ENCODE measurements at regions of chr1 and their contacts with region 1.

Region 1: GRCh38 chr1:92080128-92080985 is at the start of gene BTBD8:
- DNase-seq: peak; percentile 71
- ATAC-seq: peak; percentile 98
- H3K4me3 ChIP-seq: peak within 1 kb of the TSS; percentile 77
- H3K27ac ChIP-seq: peak within 1 kb of the TSS; percentile 55
- H3K4me1 ChIP-seq: no peaks in the 10 kb centered on the region
- H3K27me3 ChIP-seq: no peaks in the 10 kb centered on the region
- CTCF ChIP-seq: no peak
- POLR2A ChIP-seq: no peak
- RAD21 ChIP-seq: no peak
- total RNA-seq, gene BTBD8: 2.0 and 3.6 TPM in 2 replicates

Region 2: GRCh38 chr1:92043621-92044020 is 36.7 kb before region 1 on chr1:
- CTCF ChIA-PET with region 1: interaction called, 11 read pairs
- POLR2A ChIA-PET with region 1: no interaction called
- dilution Hi-C with region 1: no loop called
- in situ Hi-C with region 1: no loop called
- intact Hi-C with region 1: no loop called
- DNase-seq: no peak
- ATAC-seq: no peak
- H3K4me3 ChIP-seq: no peak overlapping the region
- H3K27ac ChIP-seq: no peak overlapping the region
- H3K4me1 ChIP-seq: peaks cover 3% of the 10 kb centered on the region; the same call in 1 of the 2 replicates
- H3K27me3 ChIP-seq: no peaks in the 10 kb centered on the region
- CTCF ChIP-seq: no peak
- POLR2A ChIP-seq: no peak
- RAD21 ChIP-seq: no peak

Region 3: DNA sequence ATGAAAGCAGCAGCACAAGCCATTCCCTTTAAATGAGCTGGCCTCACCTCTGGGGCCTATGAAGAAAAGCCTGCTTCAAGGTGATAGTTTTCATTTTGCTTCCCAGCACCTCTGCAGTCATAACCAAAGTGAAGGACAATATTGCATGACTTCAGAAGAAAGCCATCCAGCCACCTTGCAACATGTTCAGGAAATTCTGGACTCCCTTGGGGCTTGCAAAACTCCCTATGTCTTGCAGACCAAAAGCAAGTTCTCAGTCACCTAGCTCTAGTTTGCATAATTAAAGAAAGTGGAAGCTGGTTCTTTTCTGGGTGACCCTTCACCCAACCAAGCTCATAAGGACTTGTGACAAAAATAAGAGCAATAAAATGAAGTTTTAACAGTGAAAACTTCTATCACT is 318.7 kb after region 1 on chr1:
- CTCF ChIA-PET with region 1: no interaction called
- POLR2A ChIA-PET with region 1: no interaction called
- dilution Hi-C with region 1: no loop called
- in situ Hi-C with region 1: no loop called
- intact Hi-C with region 1: no loop called
- DNase-seq: no peak
- ATAC-seq: no peak
- H3K4me3 ChIP-seq: no peak overlapping the region
- H3K27ac ChIP-seq: no peak overlapping the region
- H3K4me1 ChIP-seq: no peaks in the 10 kb centered on the region
- H3K27me3 ChIP-seq: no peaks in the 10 kb centered on the region
- CTCF ChIP-seq: no peak
- POLR2A ChIP-seq: no peak
- RAD21 ChIP-seq: no peak